HEK293T (cell line): ENCODE measurements at regions of chr17 and their contacts with region 1.

Region 1: GRCh38 chr17:79810130-79811010 is 13.5 kb upstream of the CBX8 start:
- DNase-seq: peak; percentile 91

Region 2: GRCh38 chr17:79651761-79652160 is 158.6 kb before region 1 on chr17:
- CTCF ChIA-PET with region 1: no interaction called
- POLR2A ChIA-PET with region 1: no interaction called
- DNase-seq: peak; percentile 1

Region 3: DNA sequence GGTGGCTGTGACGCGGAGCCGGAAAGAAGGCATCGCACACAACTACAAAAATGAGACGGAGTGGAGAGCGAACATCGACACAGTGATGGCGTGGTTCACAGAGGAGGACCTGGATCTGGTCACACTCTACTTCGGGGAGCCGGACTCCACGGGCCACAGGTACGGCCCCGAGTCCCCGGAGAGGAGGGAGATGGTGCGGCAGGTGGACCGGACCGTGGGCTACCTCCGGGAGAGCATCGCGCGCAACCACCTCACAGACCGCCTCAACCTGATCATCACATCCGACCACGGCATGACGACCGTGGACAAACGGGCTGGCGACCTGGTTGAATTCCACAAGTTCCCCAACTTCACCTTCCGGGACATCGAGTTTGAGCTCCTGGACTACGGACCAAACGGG is 75.3 kb before region 1 on chr17:
- CTCF ChIA-PET with region 1: no interaction called
- POLR2A ChIA-PET with region 1: no interaction called
- DNase-seq: no peak

Region 4: GRCh38 chr17:79796763-79797491 is 13.4 kb before region 1 on chr17 and contains the start of gene CBX8:
- CTCF ChIA-PET with region 1: interaction called, 6 read pairs
- POLR2A ChIA-PET with region 1: interaction called, 33 read pairs
- DNase-seq: peak; percentile 99